ENCODE measurements at regions of chr11 and their contacts with region 1.

Region 1: GRCh38 chr11:119356349-119357031 is 10.0 kb upstream of the MFRP start:
- DNase-seq: no peak
- H3K4me3 ChIP-seq: peak overlapping the region; percentile 53
- CTCF ChIP-seq: peak; percentile 81

Region 2: DNA sequence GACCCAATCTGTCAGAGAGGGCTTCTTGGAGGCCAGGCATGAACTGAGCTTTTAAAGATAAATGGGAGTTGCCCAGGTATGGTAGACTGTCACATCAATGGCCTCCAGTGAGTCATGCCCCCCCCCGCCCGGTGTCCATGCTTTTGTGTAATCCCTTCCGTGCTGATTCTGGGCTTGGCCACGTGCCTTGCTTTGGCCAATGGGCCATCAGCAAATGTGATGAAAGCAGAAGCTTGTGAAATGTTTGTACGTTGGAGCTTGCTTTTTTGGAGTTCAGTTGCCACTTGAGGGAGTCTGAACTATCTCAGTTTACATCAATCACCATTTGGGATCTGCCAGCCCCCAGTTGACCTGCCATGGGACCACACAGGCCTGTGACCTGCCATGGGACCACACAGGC is 70.8 kb after region 1 on chr11:
- in situ Hi-C with region 1: loop called (anchors 5 kb)
- DNase-seq: no peak
- H3K4me3 ChIP-seq: no peak overlapping the region
- CTCF ChIP-seq: no peak

Region 3: GRCh38 chr11:119721129-119722120 is 364.9 kb after region 1 on chr11:
- in situ Hi-C with region 1: loop called (anchors 25 kb)
- DNase-seq: no peak
- H3K4me3 ChIP-seq: no peak overlapping the region
- CTCF ChIP-seq: peak; percentile 70

Measured in astrocyte of the cerebellum (primary cell).